Heart left ventricle (tissue), 16 donors: ENCODE measurements at regions of chr7 and their contacts with region 1.

Region 1: GRCh38 chr7:37081436-37081835 is 357.1 kb upstream of the AOAH start:
- DNase-seq: peak; percentile 20 to 62 (median 39)
- ATAC-seq: no peak
- H3K4me3 ChIP-seq: no peak overlapping the region
- H3K27ac ChIP-seq: no peak overlapping the region
- H3K4me1 ChIP-seq: peaks cover 0 to 39% (median 6%) of the 10 kb centered on the region in 12 donors
- H3K27me3 ChIP-seq: no peaks in the 10 kb centered on the region
- CTCF ChIP-seq: no peak
- POLR2A ChIP-seq: no peak

Region 2: DNA sequence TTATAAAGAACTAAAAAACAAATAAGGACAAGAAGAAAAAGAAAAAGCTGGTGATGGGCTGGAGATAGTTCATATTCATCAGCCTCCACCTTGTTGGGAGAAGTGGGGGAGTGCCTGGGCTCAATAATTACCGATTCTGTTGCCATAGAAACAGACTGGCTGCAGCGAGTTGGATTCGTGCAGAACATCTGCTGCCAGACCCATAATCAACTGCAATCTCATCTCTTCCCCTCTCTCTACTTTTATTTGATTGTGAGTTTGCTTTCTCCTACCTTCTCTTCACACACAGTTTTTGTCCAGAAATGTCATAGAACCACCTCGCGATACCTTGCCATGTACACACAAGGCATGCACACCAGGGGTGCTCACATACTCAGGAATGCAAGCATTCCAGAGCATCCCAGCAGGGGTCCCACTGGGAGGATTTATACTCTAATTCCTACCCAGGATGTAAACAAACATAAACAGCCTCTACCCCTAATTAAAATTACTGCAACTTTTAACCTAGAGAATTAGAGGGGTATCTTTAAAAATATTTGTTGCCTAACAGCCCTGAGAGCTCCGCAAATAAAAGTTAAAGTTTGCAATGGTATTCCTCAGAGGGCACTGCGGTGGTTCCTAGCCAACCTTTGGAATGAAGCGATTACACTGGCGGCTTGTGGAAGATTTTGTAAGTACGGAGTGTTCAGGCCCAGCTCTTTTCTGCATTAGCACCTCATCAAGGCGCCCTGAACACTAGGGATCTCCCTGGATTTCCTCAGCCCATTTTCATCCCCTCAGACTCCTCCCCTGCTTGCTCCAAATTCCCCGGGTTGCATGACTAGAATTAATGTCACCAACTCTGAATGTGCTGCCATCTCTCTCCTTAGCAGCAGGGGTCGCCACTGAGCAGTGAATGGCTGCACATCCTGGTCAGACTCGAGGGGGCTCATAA is 94.7 kb before region 1 on chr7:
- intact Hi-C with region 1: loop called in 2 of 10 experiments (anchors 5 to 10 kb)
- DNase-seq: peak; percentile 47 to 75 (median 50)
- ATAC-seq: peak in 3 of 4 donors; percentile 56 to 65 (median 60)
- H3K4me3 ChIP-seq: no peak overlapping the region
- H3K27ac ChIP-seq: no peak overlapping the region
- H3K4me1 ChIP-seq: peaks cover 0 to 19% (median 9%) of the 10 kb centered on the region in 12 donors
- H3K27me3 ChIP-seq: peaks cover 0 to 3% (median 0%) of the 10 kb centered on the region in 9 donors
- CTCF ChIP-seq: peak; percentile 62 to 87 (median 80)
- POLR2A ChIP-seq: no peak

Region 3: DNA sequence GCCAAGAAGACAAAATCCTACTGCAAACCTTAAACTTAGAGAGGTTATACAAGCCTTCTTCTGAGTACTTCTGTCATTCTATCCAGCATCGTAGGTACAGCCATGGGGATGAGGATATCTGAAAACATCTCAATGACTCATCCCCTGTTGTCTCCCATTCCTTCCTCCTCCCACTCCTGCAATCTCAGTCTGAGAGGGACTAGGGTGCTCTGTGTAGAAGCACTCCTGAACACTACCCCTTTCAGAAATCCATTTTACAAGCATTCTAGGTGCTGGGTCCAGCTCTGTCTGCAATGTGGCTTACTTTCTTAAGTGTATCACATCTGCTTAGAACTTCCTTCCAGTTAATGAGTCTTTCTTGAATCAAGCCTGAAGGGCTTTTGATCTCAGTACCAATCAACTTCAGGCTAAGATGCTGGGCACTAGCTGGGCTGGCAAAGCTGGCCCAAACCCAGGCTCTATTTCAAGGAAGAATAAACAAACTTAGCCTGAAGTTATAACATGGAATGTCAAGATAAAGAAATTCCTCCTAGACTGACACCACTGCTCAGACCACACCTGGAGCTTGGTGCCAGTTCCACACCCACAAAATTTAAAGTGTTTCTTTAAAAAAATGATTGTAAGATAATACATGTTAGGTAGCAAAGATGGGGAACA is 86.9 kb before region 1 on chr7:
- intact Hi-C with region 1: loop called in 2 of 10 experiments (anchors 5 to 10 kb)
- DNase-seq: no peak
- ATAC-seq: no peak
- H3K4me3 ChIP-seq: no peak overlapping the region
- H3K27ac ChIP-seq: no peak overlapping the region
- H3K4me1 ChIP-seq: peaks cover 0 to 5% (median 0%) of the 10 kb centered on the region in 12 donors
- H3K27me3 ChIP-seq: no peaks in the 10 kb centered on the region
- CTCF ChIP-seq: no peak
- POLR2A ChIP-seq: no peak

Region 4: DNA sequence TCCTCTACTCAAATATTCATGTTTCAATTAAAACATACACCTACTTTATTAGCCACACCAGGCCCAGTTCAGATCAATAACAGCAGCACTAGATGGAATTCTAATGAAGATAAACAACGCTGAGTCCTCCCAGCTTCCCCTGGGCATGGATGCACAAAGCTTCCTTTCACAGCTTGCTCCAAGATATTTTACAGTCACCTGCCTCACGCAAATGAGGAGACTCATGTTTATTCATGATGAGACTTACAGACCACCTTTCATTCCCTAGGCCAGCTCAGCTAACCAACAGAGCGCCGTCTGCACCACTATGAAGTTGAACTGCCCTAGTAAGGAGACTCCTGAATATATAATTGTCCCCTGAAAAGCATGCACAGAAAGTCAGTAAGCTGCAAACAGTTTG is 74.2 kb before region 1 on chr7:
- intact Hi-C with region 1: no loop called
- DNase-seq: no peak
- ATAC-seq: no peak
- H3K4me3 ChIP-seq: no peak overlapping the region
- H3K27ac ChIP-seq: no peak overlapping the region
- H3K4me1 ChIP-seq: no peaks in the 10 kb centered on the region
- H3K27me3 ChIP-seq: no peaks in the 10 kb centered on the region
- CTCF ChIP-seq: no peak
- POLR2A ChIP-seq: no peak